ENCODE measurements at regions of chr7 and their contacts with region 1.

Region 1: GRCh38 chr7:16918288-16918895 is 36.6 kb upstream of the AGR3 start:
- DNase-seq: no peak
- H3K4me3 ChIP-seq: no peak overlapping the region
- CTCF ChIP-seq: no peak
- POLR2A ChIP-seq: no peak

Region 2: GRCh38 chr7:16695621-16696237 is 222.7 kb before region 1 on chr7:
- intact Hi-C with region 1: loop called (anchors 10 kb)
- DNase-seq: peak in 1 of 2 donors; percentile 30
- H3K4me3 ChIP-seq: no peak overlapping the region
- CTCF ChIP-seq: no peak
- POLR2A ChIP-seq: no peak

Region 3: GRCh38 chr7:16801111-16801542 is 117.3 kb before region 1 on chr7:
- intact Hi-C with region 1: loop called (anchors 5 kb)
- DNase-seq: no peak
- H3K4me3 ChIP-seq: no peak overlapping the region
- CTCF ChIP-seq: no peak
- POLR2A ChIP-seq: no peak

Measured in lower leg skin (tissue), 4 donors.